ENCODE measurements at regions of chr21 and their contacts with region 1.

Region 1: GRCh38 chr21:38766987-38767722 is 38.6 kb upstream of the ETS2 start:
- DNase-seq: peak; percentile 80
- H3K4me3 Mint-ChIP-seq: peak overlapping the region; percentile 69
- H3K27ac Mint-ChIP-seq: peak overlapping the region; percentile 90
- H3K4me1 Mint-ChIP-seq: peaks cover 49% of the 10 kb centered on the region
- H3K27me3 Mint-ChIP-seq: peaks cover 9% of the 10 kb centered on the region

Region 2: DNA sequence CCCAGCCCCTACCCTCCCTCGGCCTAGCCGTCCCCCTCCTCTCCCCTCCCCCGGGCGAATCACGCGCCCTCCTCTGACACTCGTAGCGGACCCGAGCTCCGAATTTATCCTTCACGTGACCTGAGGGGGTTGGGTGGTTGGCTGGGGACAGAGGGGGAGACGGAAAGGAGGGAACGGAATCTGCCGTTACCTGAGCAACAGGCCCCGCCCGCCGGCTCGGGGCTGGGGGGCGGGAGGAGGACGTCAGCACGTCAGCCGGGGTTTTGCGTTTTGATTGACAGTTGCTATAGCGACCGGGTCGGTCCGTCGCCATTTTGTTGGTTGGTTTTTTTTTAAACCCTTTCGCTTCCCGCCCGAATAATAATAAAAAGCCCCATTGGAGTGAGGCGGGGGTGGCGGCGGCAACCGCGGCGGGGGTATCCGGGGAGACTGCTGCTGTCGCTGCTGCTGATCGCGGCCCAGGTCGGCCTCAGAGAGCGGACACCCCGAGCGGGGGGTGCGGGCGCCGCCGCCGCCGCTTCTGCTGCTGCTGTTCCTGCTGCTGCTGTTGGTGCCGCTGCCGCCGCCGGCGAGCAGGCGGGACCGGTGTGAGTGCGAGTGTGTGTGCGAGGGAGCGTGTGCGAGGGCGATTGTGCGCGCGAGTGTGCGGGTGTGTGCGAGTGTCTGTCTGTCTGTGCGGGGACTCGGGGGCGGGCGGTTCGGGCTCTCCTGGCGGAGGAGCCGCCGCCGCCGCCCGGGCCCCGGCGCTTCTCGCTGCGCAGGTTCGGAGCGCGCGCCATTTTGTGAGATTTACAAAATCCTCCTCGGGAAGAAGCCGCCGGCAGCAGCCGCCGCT is 1400.5 kb before region 1 on chr21 and contains the start of gene DYRK1A:
- CTCF ChIA-PET with region 1: no interaction called
- POLR2A ChIA-PET with region 1: no interaction called
- intact Hi-C with region 1: loop called (anchors 5 kb)
- DNase-seq: peak; percentile 99
- H3K4me3 Mint-ChIP-seq: peak within 1 kb of the TSS; percentile 98
- H3K27ac Mint-ChIP-seq: peak within 1 kb of the TSS; percentile 99
- H3K4me1 Mint-ChIP-seq: peaks cover 34% of the 10 kb centered on the region
- H3K27me3 Mint-ChIP-seq: no peaks in the 10 kb centered on the region
- total RNA-seq, gene DYRK1A: 47.6 to 51.1 TPM

Region 3: GRCh38 chr21:38733973-38734546 is 33.1 kb before region 1 on chr21:
- CTCF ChIA-PET with region 1: no interaction called
- POLR2A ChIA-PET with region 1: interaction called, 3 read pairs
- intact Hi-C with region 1: loop called (anchors 2 kb)
- DNase-seq: peak; percentile 78
- H3K4me3 Mint-ChIP-seq: peak overlapping the region; percentile 65
- H3K27ac Mint-ChIP-seq: no peak overlapping the region
- H3K4me1 Mint-ChIP-seq: peaks cover 10% of the 10 kb centered on the region
- H3K27me3 Mint-ChIP-seq: peaks cover 24% of the 10 kb centered on the region

Region 4: DNA sequence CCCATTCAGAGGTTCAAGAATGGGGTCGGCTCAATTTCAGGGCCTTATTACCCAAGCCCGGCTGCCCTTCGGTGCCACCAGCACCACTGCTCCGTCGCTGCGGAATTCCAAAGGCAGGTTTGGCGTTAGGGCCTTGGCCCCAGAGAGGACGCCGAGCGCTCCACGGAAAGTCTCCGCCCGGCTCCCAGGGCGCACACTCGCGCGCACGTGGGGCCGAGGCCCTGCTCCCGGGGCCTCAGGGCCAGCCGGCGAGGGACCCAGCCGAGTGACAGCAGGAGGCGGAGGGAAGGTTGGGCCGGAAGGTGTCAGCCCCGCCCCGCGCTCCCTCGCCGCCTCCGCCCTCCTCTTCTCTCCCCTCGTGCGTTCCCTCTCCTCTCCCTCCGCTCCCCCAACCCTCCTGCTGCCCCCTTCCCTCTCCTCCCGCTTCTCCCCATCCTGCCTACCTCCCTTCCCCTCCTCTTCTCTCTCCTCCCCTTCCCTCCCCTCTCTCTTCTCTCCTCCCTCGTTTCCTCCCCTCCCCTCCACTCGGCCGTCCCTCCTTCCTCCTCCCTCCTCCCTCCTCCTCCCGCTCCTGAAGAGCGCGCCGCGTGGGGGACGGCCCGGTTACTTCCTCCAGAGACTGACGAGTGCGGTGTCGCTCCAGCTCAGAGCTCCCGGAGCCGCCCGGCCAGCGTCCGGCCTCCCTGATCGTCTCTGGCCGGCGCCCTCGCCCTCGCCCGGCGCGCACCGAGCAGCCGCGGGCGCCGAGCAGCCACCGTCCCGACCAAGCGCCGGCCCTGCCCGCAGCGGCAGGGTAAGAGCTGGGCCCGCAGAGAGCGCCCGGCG is 38.4 kb after region 1 on chr21 and contains the start of gene ETS2:
- CTCF ChIA-PET with region 1: interaction called, 22 read pairs
- POLR2A ChIA-PET with region 1: interaction called, 31 read pairs
- intact Hi-C with region 1: loop called (anchors 1 kb)
- DNase-seq: peak; percentile 81
- H3K4me3 Mint-ChIP-seq: peak within 1 kb of the TSS; percentile 87
- H3K27ac Mint-ChIP-seq: peak within 1 kb of the TSS; percentile 87
- H3K4me1 Mint-ChIP-seq: peaks cover 40% of the 10 kb centered on the region
- H3K27me3 Mint-ChIP-seq: peaks cover 2% of the 10 kb centered on the region
- total RNA-seq, gene ETS2: 22.1 to 25.0 TPM

Region 5: DNA sequence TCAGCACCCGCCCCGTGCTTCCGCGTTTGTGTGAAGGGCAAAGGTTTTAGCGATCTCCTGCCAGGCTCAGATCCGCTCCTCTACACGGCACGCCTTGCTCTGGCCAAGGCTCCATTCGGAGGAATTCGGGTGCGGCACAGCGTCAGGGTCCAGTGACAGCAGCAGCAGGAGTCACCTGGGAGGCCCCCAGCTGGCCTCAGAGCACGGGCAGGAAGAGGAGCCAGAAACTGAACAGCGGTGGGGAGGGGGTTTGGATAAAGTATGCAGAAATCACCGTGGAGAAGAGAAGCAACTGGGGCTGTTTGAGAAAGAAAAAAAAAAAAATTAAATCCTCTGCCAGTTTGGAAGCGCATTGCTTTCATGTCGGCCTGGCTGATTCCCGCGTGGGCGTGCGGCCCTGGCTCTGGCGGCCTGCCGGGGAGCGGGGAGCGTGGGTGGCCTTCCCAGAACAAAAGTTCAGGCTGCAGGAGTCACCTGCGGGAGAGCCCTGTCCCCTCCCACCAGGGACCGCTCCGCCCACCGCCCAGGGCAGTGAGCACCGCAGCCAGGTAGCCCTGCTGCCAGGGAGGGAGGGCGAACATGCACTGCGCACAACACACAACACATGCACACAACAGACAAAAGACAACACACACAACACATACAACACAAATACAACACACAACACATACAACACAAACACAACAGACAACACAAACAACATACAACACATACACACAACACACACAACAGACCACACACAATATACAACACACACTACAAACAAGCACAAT is 146.2 kb after region 1 on chr21:
- CTCF ChIA-PET with region 1: no interaction called
- POLR2A ChIA-PET with region 1: no interaction called
- intact Hi-C with region 1: loop called (anchors 5 kb)
- DNase-seq: peak; percentile 40
- H3K4me3 Mint-ChIP-seq: no peak overlapping the region
- H3K27ac Mint-ChIP-seq: no peak overlapping the region
- H3K4me1 Mint-ChIP-seq: peaks cover 2% of the 10 kb centered on the region
- H3K27me3 Mint-ChIP-seq: peaks cover 11% of the 10 kb centered on the region

Region 6: DNA sequence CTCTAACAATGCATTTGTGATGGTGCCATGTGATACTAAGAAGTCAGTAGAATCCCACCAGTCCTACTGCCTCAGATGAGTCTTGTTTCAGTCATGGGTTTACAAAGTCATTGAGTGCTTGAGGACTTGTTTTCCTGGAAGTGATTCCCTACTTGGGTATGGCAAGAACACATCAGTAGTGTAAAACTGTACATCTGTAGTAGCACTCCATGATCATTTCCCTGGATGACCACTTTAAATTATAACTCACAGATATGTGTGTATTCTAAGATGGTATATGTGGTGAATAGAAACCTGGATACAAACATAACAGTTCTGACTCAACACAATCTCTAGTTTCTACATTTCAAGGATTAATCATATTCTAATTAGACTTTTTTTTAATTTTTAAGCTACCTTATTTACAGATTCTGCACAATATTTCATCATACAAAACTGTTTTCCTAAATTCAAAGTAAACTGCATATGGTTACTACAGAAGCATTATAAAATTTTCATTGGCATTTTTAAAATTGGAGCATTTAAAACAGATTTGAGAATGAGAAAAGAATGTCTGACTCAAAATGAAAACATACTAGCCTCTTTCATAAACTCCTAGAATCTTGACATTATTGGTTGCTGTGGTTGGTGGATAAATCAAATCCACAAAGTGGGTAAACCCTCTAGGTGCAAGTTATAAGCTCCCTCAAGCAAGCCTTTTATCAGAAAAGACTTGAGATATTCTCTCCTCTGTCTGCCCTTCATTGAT is 422.9 kb after region 1 on chr21:
- CTCF ChIA-PET with region 1: no interaction called
- POLR2A ChIA-PET with region 1: no interaction called
- intact Hi-C with region 1: loop called (anchors 2 kb)
- DNase-seq: no peak
- H3K4me3 Mint-ChIP-seq: no peak overlapping the region
- H3K27ac Mint-ChIP-seq: no peak overlapping the region
- H3K4me1 Mint-ChIP-seq: peaks cover 51% of the 10 kb centered on the region
- H3K27me3 Mint-ChIP-seq: no peaks in the 10 kb centered on the region

Region 7: GRCh38 chr21:39388038-39388810 is 621.1 kb after region 1 on chr21:
- CTCF ChIA-PET with region 1: no interaction called
- POLR2A ChIA-PET with region 1: no interaction called
- intact Hi-C with region 1: loop called (anchors 10 kb)
- DNase-seq: peak; percentile 92
- H3K4me3 Mint-ChIP-seq: peak overlapping the region; percentile 80
- H3K27ac Mint-ChIP-seq: peak overlapping the region; percentile 87
- H3K4me1 Mint-ChIP-seq: peaks cover 32% of the 10 kb centered on the region
- H3K27me3 Mint-ChIP-seq: no peaks in the 10 kb centered on the region